ENCODE measurements at regions of chr6 and their contacts with region 1.

Region 1: DNA sequence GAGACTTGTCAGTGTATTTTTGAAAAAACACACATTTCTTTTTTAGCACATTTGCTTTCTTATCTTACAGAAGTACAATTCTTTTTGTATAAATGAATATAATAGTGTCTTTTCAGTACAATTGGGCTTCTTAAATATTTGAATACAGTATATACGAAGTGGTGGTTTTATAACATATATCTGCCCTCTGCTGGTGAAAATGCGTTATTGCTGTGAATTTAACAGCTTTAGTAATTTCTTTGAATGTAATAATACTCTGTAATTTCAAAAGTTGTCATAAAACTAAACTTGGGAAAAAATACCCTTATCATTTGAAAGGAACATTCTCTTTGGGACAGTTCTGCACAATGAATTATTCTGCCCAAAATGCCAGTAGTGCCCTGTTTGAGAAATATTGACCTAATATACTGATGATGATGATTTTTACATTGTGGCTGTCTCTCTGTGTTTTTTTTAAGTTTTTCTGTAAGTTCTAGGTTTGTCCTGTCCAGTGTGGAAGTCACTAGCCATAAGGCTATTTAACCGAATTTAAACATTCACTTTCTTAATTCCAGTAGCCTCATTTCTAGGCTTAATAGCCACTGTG is 19.0 kb downstream of the SMAP1 start:
- DNase-seq: peak; percentile 41
- ATAC-seq: no peak
- H3K4me3 Mint-ChIP-seq: no peak overlapping the region
- H3K27ac Mint-ChIP-seq: no peak overlapping the region
- H3K4me1 Mint-ChIP-seq: peaks cover 26% of the 10 kb centered on the region
- H3K27me3 Mint-ChIP-seq: no peaks in the 10 kb centered on the region

Region 2: DNA sequence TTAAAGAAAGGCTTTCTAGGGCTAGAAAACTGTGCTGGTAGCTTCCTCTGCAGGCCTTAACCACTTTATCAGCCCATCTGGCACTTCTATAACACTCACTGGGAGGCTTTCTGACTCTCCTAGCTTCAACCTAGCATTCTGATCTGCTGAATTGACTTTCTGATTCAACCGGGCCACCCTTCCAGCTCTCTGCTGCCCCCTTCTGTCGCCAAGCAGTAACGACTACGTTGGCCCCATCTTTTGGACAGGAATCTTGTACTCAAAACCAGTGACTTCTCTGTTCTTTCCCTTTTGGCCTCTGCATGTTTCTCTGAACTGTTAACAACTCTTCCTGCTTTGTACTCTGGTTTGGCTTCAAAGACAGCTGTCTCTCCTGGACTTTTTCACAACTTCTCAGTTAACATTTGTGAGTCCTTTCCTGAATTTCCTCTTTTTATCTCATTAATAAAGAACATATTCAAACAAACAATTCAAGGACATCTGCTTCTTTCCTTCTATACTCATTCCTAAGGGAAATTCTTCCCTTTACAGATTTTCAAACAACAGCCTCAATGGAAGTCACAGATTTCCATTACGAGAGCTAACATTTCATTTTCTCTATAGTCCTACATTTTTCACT is 317.2 kb before region 1 on chr6:
- CTCF ChIA-PET with region 1: interaction called, 25 read pairs
- POLR2A ChIA-PET with region 1: no interaction called
- DNase-seq: peak; percentile 76
- ATAC-seq: peak; percentile 84
- H3K4me3 Mint-ChIP-seq: no peak overlapping the region
- H3K27ac Mint-ChIP-seq: no peak overlapping the region
- H3K4me1 Mint-ChIP-seq: no peaks in the 10 kb centered on the region
- H3K27me3 Mint-ChIP-seq: peaks cover 36% of the 10 kb centered on the region

Region 3: GRCh38 chr6:70520575-70520974 is 166.1 kb before region 1 on chr6:
- CTCF ChIA-PET with region 1: interaction called, 51 read pairs
- POLR2A ChIA-PET with region 1: interaction called, 4 read pairs
- DNase-seq: peak; percentile 33
- ATAC-seq: no peak
- H3K4me3 Mint-ChIP-seq: no peak overlapping the region
- H3K27ac Mint-ChIP-seq: no peak overlapping the region
- H3K4me1 Mint-ChIP-seq: peaks cover 7% of the 10 kb centered on the region
- H3K27me3 Mint-ChIP-seq: no peaks in the 10 kb centered on the region

Region 4: DNA sequence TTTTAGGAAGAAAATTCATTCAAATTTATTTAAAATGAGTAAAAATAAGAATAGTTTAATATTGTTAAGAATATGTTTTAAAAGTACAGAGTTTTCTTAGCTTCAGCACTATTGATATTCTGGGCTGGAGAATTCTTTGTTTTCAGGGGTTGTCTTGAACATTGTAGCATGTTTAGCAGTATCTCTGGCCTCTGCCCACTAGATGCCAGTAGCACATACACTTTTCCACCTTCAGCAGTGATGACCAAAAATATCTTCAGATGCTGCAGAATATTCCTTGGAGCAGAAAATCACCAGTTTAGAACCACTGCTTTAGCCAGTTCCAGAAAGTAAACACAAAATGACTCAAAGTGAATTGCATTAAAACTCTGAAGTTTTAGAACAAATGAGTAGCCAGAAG is 139.3 kb before region 1 on chr6:
- CTCF ChIA-PET with region 1: interaction called, 53 read pairs
- POLR2A ChIA-PET with region 1: no interaction called
- DNase-seq: peak; percentile 41
- ATAC-seq: peak; percentile 57
- H3K4me3 Mint-ChIP-seq: no peak overlapping the region
- H3K27ac Mint-ChIP-seq: no peak overlapping the region
- H3K4me1 Mint-ChIP-seq: no peaks in the 10 kb centered on the region
- H3K27me3 Mint-ChIP-seq: no peaks in the 10 kb centered on the region

Region 5: GRCh38 chr6:70566751-70567382 is 119.8 kb before region 1 on chr6 and contains the start of gene SDHAF4:
- CTCF ChIA-PET with region 1: interaction called, 15 read pairs
- POLR2A ChIA-PET with region 1: no interaction called
- DNase-seq: peak; percentile 95
- ATAC-seq: peak; percentile 100
- H3K4me3 Mint-ChIP-seq: peak within 1 kb of the TSS; percentile 87
- H3K27ac Mint-ChIP-seq: peak within 1 kb of the TSS; percentile 82
- H3K4me1 Mint-ChIP-seq: peaks cover 15% of the 10 kb centered on the region
- H3K27me3 Mint-ChIP-seq: peaks cover 9% of the 10 kb centered on the region
- total RNA-seq, gene SDHAF4: 7.7 to 9.5 TPM

Region 6: GRCh38 chr6:70667711-70668498 is 18.7 kb before region 1 on chr6 and contains the start of gene SMAP1:
- CTCF ChIA-PET with region 1: interaction called, 23 read pairs
- POLR2A ChIA-PET with region 1: interaction called, 4 read pairs
- DNase-seq: peak; percentile 94
- ATAC-seq: peak; percentile 94
- H3K4me3 Mint-ChIP-seq: peak within 1 kb of the TSS; percentile 86
- H3K27ac Mint-ChIP-seq: peak within 1 kb of the TSS; percentile 75
- H3K4me1 Mint-ChIP-seq: peaks cover 46% of the 10 kb centered on the region
- H3K27me3 Mint-ChIP-seq: no peaks in the 10 kb centered on the region
- total RNA-seq, gene SMAP1: 36.3 to 38.7 TPM

Region 7: DNA sequence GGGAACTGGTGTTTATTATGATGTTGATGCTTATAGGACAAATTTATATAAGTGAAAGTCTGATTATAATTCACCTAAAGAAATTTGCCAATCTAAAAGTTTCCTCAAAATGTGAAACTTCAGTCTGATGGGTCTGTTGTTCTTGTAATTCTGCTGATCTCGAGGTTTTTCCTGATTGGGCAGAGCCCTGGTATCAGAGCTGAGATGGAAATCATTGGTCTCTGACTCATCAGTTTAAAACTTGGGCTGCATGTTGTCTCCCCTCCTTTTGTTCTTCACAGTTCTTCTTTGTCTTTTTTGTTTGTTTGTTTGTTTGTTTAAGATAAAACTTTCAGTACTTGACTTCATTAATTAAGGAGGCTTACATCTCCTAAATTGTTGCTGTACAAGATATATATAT is 13.0 kb before region 1 on chr6:
- CTCF ChIA-PET with region 1: interaction called, 23 read pairs
- POLR2A ChIA-PET with region 1: interaction called, 3 read pairs
- DNase-seq: no peak
- ATAC-seq: peak; percentile 42
- H3K4me3 Mint-ChIP-seq: no peak overlapping the region
- H3K27ac Mint-ChIP-seq: no peak overlapping the region
- H3K4me1 Mint-ChIP-seq: peaks cover 51% of the 10 kb centered on the region
- H3K27me3 Mint-ChIP-seq: no peaks in the 10 kb centered on the region